Panc1 (cell line): ENCODE measurements at regions of chr12 and their contacts with region 1.

Region 1: DNA sequence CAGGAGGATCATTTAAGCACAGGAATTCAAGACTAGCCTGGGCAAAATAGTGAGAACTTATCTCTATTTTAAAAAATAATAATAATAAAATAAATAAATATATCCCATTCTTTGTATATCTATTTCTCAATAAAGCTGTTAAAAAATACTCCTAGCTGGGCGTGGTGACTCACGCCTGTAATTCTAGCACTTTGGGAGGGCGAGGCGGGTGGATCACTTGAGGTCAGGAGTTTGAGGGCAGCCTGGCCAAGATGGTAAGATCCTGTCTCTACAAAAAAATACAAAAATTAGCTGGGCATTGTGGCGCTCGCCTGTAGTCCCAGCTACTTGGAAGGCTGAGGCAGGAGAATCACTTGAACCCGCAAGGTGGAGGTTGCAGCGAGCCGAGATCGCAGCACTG is 75.7 kb upstream of the TBX3 start:
- DNase-seq: no peak
- ATAC-seq: no peak
- H3K4me3 ChIP-seq: no peak overlapping the region
- H3K27ac ChIP-seq: no peak overlapping the region
- H3K4me1 ChIP-seq: no peaks in the 10 kb centered on the region
- H3K27me3 ChIP-seq: no peaks in the 10 kb centered on the region
- CTCF ChIP-seq: no peak

Region 2: GRCh38 chr12:114835031-114835430 is 75.4 kb after region 1 on chr12:
- CTCF ChIA-PET with region 1: no interaction called
- POLR2A ChIA-PET with region 1: interaction called, 14 read pairs
- in situ Hi-C with region 1: no loop called
- intact Hi-C with region 1: no loop called
- DNase-seq: no peak
- ATAC-seq: no peak
- H3K4me3 ChIP-seq: no peak overlapping the region
- H3K27ac ChIP-seq: no peak overlapping the region
- H3K4me1 ChIP-seq: no peaks in the 10 kb centered on the region
- H3K27me3 ChIP-seq: no peaks in the 10 kb centered on the region
- CTCF ChIP-seq: no peak